Posterior cingulate gyrus (tissue), 11 donors: ENCODE measurements at regions of chr10 and their contacts with region 1.

Region 1: DNA sequence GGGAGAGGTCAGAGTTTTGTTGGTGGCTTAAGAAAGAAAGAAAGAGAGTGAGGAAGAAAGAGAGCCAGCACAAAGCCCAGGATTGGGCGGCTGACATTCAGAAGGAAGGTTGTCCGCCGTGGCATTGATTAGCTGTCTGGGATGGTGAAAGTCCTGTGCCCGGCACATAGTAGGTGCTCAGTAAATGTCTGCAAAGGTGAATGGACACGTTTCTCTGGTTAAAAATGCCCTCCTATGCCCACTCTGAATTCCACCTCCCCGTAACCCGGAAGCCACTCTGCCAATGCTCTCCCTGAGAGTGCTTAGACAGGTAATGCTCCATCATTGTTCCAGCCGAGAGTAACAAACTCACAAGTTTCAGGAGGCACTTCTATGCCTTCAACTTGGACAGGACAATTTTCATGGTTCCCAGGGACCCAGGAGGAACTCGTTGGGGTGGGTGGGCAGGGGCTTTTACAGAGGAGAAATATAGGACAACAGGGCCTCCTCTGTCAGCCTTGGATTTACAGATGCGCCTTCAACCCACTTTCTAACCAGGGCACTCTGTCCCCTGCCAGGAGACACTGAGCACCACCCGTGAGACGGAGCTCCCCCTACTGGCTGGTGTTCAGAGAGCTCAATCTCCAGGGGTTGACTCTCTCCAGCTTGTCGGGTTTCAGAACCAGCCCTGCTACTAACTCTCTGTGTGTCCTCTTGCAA is 411.5 kb upstream of the ZMIZ1 start:
- DNase-seq: peak; percentile 25 to 91 (median 72)

Region 2: GRCh38 chr10:78053211-78053868 is 604.0 kb before region 1 on chr10:
- intact Hi-C with region 1: loop called (anchors 10 kb)
- DNase-seq: peak in 1 of 10 donors; percentile 39

Region 3: DNA sequence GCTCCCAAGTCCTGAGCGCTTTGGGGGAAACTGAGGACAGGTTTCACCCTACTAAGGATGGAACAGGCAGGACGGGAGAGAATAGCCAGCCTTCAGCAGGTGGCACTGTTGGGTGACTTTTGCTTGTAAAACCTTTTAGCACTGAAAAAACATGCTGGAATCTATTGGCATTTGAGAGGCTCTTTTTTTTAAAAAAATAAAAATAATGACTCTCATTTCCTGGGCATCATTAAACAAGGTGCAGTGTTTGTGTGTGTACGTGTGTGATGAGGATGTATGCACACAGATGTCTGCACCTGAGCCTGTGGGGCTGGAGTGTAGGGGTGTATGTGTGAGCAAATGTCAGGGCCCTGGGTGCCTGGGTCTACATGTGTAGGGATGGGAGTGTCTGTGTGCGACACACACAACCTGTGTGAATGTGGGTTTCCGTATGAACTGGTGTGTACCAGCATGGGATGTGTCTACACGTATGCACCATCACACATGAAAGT is 445.7 kb before region 1 on chr10:
- intact Hi-C with region 1: loop called (anchors 5 kb)
- DNase-seq: peak in 8 of 10 donors; percentile 29 to 95 (median 72)

Region 4: DNA sequence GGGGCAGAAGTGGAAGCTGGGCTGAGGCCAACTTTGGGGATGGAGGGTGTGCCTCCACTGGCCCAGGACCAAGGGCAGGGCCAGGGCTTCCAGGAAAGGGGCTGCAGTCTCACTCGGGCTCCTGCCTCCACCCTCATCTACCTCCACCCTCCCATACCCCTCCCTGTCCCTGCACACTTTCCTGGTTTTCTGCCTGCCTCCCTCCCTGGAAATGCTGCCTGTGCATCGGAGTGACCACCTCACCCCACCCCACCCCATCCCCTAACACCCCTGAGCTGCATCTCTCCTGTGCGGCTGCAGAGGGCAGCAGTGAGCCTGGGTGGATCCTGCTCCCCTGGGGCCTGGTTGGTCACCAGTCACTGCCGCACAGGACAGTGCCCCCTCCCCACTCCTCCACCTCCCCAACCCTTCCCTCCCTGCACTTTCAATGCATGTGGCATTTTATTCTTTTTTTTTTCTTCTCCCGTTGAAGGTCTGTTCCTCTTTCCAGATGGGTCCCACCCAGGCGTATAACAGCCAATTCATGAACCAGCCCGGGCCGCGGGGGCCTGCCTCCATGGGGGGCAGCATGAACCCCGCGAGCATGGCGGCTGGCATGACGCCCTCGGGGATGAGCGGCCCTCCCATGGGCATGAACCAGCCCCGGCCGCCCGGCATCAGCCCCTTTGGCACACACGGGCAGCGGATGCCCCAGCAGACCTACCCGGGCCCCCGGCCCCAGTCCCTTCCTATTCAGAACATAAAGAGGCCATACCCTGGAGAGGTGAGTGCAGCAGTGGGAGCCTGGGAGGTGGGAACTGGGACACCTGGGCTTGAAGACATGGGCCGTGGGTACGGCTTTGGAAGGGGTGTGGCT is 635.8 kb after region 1 on chr10:
- intact Hi-C with region 1: no loop called
- DNase-seq: peak in 3 of 10 donors; percentile 41 to 91 (median 61)